Spleen (tissue), 13 donors: ENCODE measurements at regions of chr22 and their contacts with region 1.

Region 1: GRCh38 chr22:17074648-17075002 is 10.2 kb upstream of the IL17RA start:
- DNase-seq: no peak
- H3K4me3 ChIP-seq: no peak overlapping the region
- H3K27ac ChIP-seq: no peak overlapping the region
- H3K4me1 ChIP-seq: peaks cover 0 to 19% (median 12%) of the 10 kb centered on the region in 6 donors
- H3K27me3 ChIP-seq: peaks cover 0 to 16% (median 0%) of the 10 kb centered on the region in 7 donors
- CTCF ChIP-seq: no peak
- POLR2A ChIP-seq: no peak

Region 2: GRCh38 chr22:17171313-17172171 is 96.9 kb after region 1 on chr22:
- intact Hi-C with region 1: loop called (anchors 5 kb)
- DNase-seq: peak; percentile 97
- H3K4me3 ChIP-seq: peak overlapping the region; percentile 45 to 87 (median 72)
- H3K27ac ChIP-seq: peak overlapping the region; percentile 88 to 96 (median 94)
- H3K4me1 ChIP-seq: peaks cover 0 to 29% (median 15%) of the 10 kb centered on the region in 6 donors
- H3K27me3 ChIP-seq: no peaks in the 10 kb centered on the region
- CTCF ChIP-seq: peak; percentile 73 to 97 (median 91)
- POLR2A ChIP-seq: no peak

Region 3: DNA sequence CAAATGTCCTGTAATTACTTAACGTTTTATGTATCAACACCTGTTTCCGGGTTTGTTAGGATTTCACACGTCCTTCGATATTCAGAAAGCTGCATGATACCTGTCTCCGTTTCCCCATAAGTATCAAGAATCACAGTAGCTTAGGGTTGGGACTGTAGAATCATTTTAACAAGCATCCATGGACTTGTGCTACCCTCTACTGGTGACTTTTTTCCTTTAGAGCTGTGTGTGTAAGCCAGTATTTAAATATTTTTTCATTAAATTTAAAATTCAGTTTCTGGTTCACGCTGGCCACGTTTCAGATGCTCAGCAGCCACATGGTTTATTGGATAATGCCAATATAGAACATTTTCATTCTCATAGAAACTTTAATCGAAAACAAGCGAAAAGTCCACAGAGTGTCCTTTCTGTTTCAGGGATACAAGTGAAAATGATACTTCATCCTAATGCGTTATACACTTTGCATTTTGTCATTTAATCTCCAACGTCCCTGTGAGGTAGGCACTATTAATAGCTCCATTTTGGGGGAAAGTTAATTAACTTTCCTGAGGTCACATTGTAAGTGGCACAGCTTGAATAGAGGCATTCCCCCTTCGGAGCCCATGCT is 427.2 kb after region 1 on chr22:
- intact Hi-C with region 1: loop called (anchors 5 kb)
- DNase-seq: no peak
- H3K4me3 ChIP-seq: no peak overlapping the region
- H3K27ac ChIP-seq: no peak overlapping the region
- H3K4me1 ChIP-seq: peaks cover 0 to 13% (median 2%) of the 10 kb centered on the region in 6 donors
- H3K27me3 ChIP-seq: peaks cover 0 to 7% (median 0%) of the 10 kb centered on the region in 7 donors
- CTCF ChIP-seq: peak; percentile 26 to 74 (median 67)
- POLR2A ChIP-seq: no peak